AG04449 (cell line): ENCODE measurements at regions of chr13 and their contacts with region 1.

Region 1: GRCh38 chr13:32669030-32669646 is 82.9 kb downstream of the PDS5B start:
- DNase-seq: no peak
- H3K4me3 ChIP-seq: no peak overlapping the region
- CTCF ChIP-seq: peak; percentile 34

Region 2: GRCh38 chr13:32261567-32261966 is 407.6 kb before region 1 on chr13:
- CTCF ChIA-PET with region 1: no interaction called
- POLR2A ChIA-PET with region 1: no interaction called
- DNase-seq: no peak
- H3K4me3 ChIP-seq: no peak overlapping the region
- CTCF ChIP-seq: no peak

Region 3: DNA sequence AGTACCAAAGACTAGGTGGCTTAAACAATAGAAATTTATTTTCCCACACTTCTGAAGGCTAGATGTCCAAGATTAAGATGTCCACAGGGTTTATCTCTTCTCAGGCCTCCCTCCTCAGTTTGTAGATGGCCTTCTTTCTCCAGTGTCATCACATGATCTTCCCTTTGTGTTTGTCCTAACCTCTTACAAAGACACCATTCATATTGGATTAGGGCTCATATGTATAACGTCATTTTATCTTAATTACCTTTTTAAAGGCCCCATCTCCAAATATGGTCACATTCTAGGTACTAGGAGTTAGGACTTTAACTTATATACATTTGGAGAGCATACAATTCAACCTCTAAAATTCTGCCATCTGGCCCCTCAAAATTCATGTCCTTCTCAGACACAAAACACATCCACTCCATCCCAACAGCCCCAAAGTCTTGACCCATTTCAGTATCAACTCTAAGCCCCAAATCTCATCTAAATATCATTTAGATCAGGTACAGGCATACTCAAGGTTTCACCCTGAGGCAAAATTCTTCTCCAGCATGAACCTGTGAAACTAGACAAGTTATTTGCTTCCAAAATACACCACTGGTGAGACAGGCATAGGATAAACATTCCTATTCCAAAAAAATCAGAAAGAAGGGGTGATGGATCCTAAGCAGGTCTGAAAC is 164.7 kb before region 1 on chr13:
- CTCF ChIA-PET with region 1: no interaction called
- POLR2A ChIA-PET with region 1: no interaction called
- DNase-seq: no peak
- H3K4me3 ChIP-seq: no peak overlapping the region
- CTCF ChIP-seq: no peak

Region 4: DNA sequence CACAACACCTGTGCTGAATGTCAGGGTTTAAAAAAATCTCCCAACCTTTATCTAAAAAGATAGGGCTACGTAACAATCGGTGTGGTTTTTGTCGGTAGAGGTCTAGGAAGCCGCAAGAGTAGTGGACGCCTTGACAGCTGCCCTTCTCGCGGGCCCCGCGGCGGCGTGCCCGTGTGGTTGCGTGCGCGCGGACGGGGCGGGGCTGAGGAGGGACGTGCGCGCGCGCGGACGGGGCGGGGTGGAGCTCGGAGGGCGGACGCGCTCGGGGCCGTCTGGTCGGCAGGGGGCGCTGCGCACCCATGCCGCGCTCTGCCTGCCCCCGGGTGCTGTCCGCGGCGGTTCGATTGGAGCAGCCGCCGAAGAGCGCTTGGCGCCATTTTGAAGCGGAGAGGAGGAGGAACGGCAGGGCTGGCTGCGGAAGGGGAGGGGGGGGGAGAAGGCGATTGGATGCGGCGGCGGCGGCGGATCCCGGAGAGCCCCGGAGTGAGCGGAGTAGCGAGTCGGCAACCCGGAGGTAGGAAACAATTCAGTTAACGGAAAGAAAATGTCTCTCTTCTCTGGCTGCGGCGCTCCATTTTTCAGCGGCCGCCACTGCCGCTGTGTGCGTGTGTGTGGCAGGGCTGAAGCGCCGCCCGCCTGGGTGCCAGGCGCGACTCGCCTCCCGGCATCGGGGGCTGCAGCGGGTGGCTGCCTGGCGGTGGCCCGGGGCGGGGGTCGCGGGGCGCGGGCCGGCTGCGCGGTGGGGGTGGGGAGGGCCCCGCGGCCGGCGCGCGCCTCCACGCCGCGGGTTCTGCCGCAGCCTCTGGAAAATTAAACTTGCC is 82.8 kb before region 1 on chr13 and contains the start of gene PDS5B:
- CTCF ChIA-PET with region 1: interaction called, 20 read pairs
- POLR2A ChIA-PET with region 1: no interaction called
- DNase-seq: peak; percentile 51
- H3K4me3 ChIP-seq: peak within 1 kb of the TSS; percentile 85
- CTCF ChIP-seq: peak; percentile 80

Region 5: DNA sequence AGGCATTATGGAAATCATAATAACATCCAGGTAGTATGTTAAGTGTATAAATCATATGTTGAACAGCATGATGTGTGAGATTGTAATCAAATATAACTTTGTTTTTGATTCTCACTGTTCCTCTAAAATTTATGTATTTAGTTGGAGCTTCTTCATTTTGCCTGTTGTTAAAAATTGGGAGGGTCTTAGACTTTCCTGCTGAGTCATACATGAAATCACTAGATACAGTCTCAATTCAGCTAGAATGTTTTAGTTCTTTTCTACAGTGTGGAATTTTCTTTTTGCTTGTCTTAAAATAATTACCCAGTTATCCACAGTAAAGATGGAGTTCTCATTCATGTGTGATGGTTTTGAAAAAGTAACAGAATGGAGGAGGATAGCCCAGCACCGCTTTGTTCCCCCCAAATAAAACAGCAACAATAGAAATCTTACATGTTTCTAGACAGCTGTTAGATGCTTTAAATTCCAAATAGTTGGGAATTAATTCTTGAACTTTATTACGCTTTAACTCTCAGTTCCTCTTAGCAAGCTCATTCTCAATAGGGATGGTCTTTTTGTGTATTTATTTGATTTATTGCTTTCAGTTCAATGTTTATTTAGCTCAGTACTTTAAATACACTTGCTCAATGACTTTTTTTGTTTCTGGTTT is 26.6 kb after region 1 on chr13:
- CTCF ChIA-PET with region 1: interaction called, 20 read pairs
- POLR2A ChIA-PET with region 1: no interaction called
- DNase-seq: no peak
- H3K4me3 ChIP-seq: no peak overlapping the region
- CTCF ChIP-seq: no peak

Region 6: DNA sequence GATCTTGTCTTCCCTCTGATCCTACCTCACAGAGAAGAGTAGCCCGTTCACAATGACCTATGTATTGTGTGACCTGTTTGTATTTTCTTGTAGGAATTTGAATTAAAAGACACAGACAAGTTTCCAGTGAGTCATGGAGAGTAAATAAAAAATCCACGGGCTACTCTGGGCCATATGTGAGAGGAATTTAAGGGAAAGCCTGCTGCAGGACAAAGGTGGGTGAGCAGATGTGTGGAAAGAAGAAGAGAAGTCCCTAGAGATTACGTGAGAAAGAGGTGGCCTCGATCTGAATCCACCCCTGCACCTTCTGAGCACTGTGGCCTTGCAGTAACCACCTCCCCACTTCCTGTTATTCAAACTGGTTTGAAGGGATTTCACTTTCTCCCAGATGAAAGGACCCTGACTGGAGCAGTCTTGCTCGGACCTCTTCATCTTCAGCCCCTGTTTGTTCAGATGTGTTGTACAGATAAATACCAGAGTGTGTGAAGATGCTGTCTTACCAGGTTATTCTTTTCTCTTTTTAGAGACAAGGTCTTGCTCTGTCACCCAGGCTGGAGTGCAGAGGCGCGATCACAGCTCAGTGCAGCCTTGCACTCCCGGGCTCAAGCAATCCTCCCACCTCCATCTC is 122.5 kb after region 1 on chr13:
- CTCF ChIA-PET with region 1: no interaction called
- POLR2A ChIA-PET with region 1: no interaction called
- DNase-seq: no peak
- H3K4me3 ChIP-seq: no peak overlapping the region
- CTCF ChIP-seq: no peak

Region 7: DNA sequence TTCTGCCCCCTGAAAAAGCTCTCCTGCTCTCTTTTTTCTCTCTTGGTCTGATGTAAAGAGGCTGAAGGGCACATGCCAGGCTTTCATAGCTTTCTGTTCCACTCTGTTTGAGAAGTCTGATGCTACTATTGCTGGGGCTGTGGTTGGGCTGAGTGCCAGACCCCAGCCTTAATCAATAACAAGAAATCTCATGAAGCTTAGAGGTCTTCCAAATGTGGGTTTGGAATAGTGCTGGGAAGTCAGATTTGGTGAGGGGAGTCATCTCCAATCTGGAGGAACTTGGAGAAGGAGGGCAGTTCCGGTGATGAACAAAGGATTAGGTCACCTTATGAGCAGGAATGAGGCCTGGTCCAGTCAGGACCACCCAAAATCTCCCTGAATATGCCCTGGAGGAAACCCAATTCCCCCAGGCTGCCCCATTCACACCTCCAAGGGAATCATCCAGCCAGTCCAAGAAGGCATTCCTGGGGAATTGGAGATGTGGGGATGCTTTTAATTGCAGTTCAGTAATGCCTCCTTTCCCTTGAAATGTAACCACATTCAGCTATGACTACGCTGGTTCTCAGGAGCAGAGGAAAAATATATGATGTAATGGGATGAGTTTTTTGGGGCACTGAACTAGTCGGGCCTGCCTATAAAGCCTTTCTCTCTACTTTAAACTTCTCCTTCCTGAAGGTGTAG is 514.4 kb after region 1 on chr13:
- CTCF ChIA-PET with region 1: no interaction called
- POLR2A ChIA-PET with region 1: no interaction called
- DNase-seq: no peak
- H3K4me3 ChIP-seq: no peak overlapping the region
- CTCF ChIP-seq: no peak